B cell (primary cell): ENCODE measurements at regions of chr12 and their contacts with region 1.

Region 1: DNA sequence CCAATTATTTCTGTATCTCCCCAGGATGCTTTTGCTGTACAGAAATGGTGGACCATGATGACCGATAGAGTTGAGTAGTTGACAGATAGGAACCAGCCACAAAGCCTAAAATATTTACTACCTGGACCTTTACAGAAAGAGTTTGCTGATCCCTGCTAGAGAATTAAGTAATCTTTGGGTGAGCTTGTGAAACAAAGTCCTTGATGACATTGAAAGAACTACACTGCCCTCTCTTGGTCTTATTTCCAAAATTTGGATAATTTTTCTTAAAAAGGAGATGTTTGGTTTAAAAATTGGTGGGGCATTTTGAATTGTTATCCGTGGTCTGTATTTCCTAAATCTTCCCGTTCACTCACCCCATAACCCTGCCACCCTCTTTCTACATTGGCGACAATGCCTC is 13.7 kb upstream of the TCTN1 start:
- DNase-seq: peak; percentile 76
- ATAC-seq: peak; percentile 35
- H3K4me3 ChIP-seq: no peak overlapping the region
- H3K4me3 Mint-ChIP-seq: peak overlapping the region; percentile 7
- H3K27ac ChIP-seq: peak overlapping the region in 1 of 2 donors; percentile 43
- H3K27ac Mint-ChIP-seq: peak overlapping the region; percentile 75
- H3K4me1 ChIP-seq: peaks cover 45 to 53% of the 10 kb centered on the region in 2 donors
- H3K4me1 Mint-ChIP-seq: peaks cover 37% of the 10 kb centered on the region
- H3K27me3 ChIP-seq: no peaks in the 10 kb centered on the region
- H3K27me3 Mint-ChIP-seq: no peaks in the 10 kb centered on the region
- CTCF ChIP-seq: peak; percentile 63

Region 2: GRCh38 chr12:110449799-110450497 is 150.3 kb before region 1 on chr12 and contains the start of gene ARPC3:
- CTCF ChIA-PET with region 1: interaction called, 329 read pairs
- POLR2A ChIA-PET with region 1: interaction called, 15 read pairs
- intact Hi-C with region 1: loop called (anchors 1 kb)
- DNase-seq: peak; percentile 97
- ATAC-seq: peak; percentile 89
- H3K4me3 ChIP-seq: peak within 1 kb of the TSS; percentile 78 to 96 (median 96)
- H3K4me3 Mint-ChIP-seq: peak within 1 kb of the TSS; percentile 98
- H3K27ac ChIP-seq: peak within 1 kb of the TSS; percentile 96 to 98
- H3K27ac Mint-ChIP-seq: peak within 1 kb of the TSS; percentile 100
- H3K4me1 ChIP-seq: peaks cover 36 to 50% of the 10 kb centered on the region in 2 donors
- H3K4me1 Mint-ChIP-seq: peaks cover 42% of the 10 kb centered on the region
- H3K27me3 ChIP-seq: no peaks in the 10 kb centered on the region
- H3K27me3 Mint-ChIP-seq: no peaks in the 10 kb centered on the region
- CTCF ChIP-seq: peak; percentile 84
- total RNA-seq, gene ARPC3: 360 and 374 TPM in 2 replicates

Region 3: DNA sequence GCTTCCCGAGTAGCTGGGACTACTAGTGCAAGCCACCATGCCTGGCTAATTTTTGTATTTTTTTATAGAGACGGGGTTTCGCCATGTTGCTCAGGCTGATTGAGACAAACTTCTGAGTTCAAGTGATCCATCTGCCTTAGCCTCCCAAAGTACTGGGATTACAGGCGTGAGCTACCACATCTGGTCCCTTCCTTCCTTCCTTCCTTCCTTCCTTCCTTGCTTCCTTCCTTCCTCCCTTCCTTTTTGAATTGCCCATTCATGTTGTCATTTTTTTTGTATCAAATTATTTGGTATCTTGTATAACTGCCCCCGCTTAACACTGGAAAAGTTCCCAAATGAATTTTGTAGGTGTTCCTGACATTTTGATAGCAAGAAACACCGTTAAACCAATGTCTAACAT is 86.4 kb before region 1 on chr12:
- CTCF ChIA-PET with region 1: interaction called, 138 read pairs
- POLR2A ChIA-PET with region 1: no interaction called
- intact Hi-C with region 1: loop called (anchors 1 kb)
- DNase-seq: no peak
- ATAC-seq: no peak
- H3K4me3 ChIP-seq: no peak overlapping the region
- H3K4me3 Mint-ChIP-seq: no peak overlapping the region
- H3K27ac ChIP-seq: no peak overlapping the region
- H3K27ac Mint-ChIP-seq: no peak overlapping the region
- H3K4me1 ChIP-seq: no peaks in the 10 kb centered on the region
- H3K4me1 Mint-ChIP-seq: no peaks in the 10 kb centered on the region
- H3K27me3 ChIP-seq: no peaks in the 10 kb centered on the region
- H3K27me3 Mint-ChIP-seq: no peaks in the 10 kb centered on the region
- CTCF ChIP-seq: no peak

Region 4: DNA sequence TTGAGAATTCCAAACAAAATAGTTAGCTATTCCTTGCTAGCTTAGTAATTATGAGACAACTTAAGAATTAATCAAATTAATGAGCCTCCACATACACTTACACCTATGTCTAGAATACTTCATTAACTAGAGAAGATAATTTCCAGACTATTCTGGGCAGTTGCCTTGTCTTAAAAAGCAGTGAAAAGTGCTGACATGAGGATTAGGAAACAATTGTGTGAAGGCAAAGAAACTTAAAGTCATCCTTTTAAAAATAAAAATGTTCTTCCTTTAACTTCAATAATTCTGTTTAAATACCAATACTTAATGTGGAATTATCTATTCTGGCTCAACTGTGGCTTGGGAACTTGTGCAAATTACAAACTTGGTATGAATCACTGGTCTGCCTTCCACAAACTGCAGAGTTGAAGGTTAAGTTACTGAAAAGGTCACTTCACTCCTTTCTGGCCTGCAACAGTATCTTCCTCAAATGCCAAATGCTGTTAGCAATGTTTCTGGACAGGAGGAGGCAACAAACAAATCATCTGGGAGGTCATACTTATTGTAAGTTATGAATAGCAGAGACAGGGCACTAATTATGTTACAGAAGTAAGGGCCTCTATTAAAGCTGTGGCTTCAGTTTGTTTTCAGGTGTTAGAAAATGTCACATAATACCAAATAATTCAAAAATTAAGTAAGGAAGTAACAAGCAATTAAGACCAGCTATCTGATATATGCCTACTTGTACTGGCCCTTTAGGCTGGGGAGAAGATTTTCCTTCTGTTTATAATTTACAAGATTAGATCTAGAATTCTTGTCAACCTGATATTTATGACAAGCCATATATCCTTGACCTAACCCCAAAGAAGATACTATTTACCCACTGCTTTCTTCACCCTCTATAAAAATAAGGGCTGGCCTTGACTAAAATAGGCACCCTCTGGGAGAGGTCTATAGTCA is 36.3 kb before region 1 on chr12:
- CTCF ChIA-PET with region 1: interaction called, 51 read pairs
- POLR2A ChIA-PET with region 1: interaction called, 5 read pairs
- intact Hi-C with region 1: loop called (anchors 2 kb)
- DNase-seq: no peak
- ATAC-seq: no peak
- H3K4me3 ChIP-seq: no peak overlapping the region
- H3K4me3 Mint-ChIP-seq: peak overlapping the region; percentile 68
- H3K27ac ChIP-seq: peak overlapping the region; percentile 75 to 82
- H3K27ac Mint-ChIP-seq: peak overlapping the region; percentile 81
- H3K4me1 ChIP-seq: peaks cover 73 to 81% of the 10 kb centered on the region in 2 donors
- H3K4me1 Mint-ChIP-seq: peaks cover 73% of the 10 kb centered on the region
- H3K27me3 ChIP-seq: no peaks in the 10 kb centered on the region
- H3K27me3 Mint-ChIP-seq: no peaks in the 10 kb centered on the region
- CTCF ChIP-seq: no peak

Region 5: GRCh38 chr12:110619534-110619953 is 19.3 kb after region 1 on chr12:
- CTCF ChIA-PET with region 1: interaction called, 91 read pairs
- POLR2A ChIA-PET with region 1: interaction called, 10 read pairs
- intact Hi-C with region 1: loop called (anchors 2 kb)
- DNase-seq: peak; percentile 76
- ATAC-seq: peak; percentile 75
- H3K4me3 ChIP-seq: peak overlapping the region in 4 of 5 experiments; percentile 30 to 55 (median 44)
- H3K4me3 Mint-ChIP-seq: peak overlapping the region; percentile 89
- H3K27ac ChIP-seq: peak overlapping the region; percentile 63 to 76
- H3K27ac Mint-ChIP-seq: peak overlapping the region; percentile 96
- H3K4me1 ChIP-seq: peaks cover 60 to 81% of the 10 kb centered on the region in 2 donors
- H3K4me1 Mint-ChIP-seq: peaks cover 65% of the 10 kb centered on the region
- H3K27me3 ChIP-seq: no peaks in the 10 kb centered on the region
- H3K27me3 Mint-ChIP-seq: no peaks in the 10 kb centered on the region
- CTCF ChIP-seq: peak; percentile 62

Region 6: GRCh38 chr12:110698171-110698902 is 98.1 kb after region 1 on chr12:
- CTCF ChIA-PET with region 1: interaction called, 52 read pairs
- POLR2A ChIA-PET with region 1: no interaction called
- intact Hi-C with region 1: loop called (anchors 1 kb)
- DNase-seq: peak; percentile 90
- ATAC-seq: peak; percentile 100
- H3K4me3 ChIP-seq: peak overlapping the region in 2 of 5 experiments; percentile 21 to 29
- H3K4me3 Mint-ChIP-seq: peak overlapping the region; percentile 64
- H3K27ac ChIP-seq: peak overlapping the region in 1 of 2 donors; percentile 58
- H3K27ac Mint-ChIP-seq: peak overlapping the region; percentile 94
- H3K4me1 ChIP-seq: peaks cover 36 to 37% of the 10 kb centered on the region in 2 donors
- H3K4me1 Mint-ChIP-seq: peaks cover 47% of the 10 kb centered on the region
- H3K27me3 ChIP-seq: no peaks in the 10 kb centered on the region
- H3K27me3 Mint-ChIP-seq: no peaks in the 10 kb centered on the region
- CTCF ChIP-seq: peak; percentile 82

Region 7: DNA sequence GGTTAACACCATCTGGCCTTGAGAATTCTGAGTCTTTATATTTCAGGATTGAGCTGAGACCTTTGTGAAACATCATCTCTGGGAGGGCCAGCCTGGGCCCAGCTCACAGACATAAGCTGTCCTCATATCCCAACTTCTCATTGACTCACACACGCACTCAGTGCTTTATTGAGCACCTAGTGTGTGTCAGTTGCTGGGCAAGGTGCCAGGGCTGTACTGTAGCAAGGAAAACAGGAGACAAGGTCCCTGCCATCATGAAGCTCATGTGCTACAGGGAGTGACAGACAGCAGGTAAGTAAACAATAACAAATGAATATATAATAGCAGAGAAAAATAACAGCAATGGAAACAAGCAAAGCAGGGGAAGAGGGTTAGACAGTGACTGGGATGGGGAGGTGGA is 216.0 kb after region 1 on chr12:
- CTCF ChIA-PET with region 1: no interaction called
- POLR2A ChIA-PET with region 1: no interaction called
- intact Hi-C with region 1: no loop called
- DNase-seq: no peak
- ATAC-seq: no peak
- H3K4me3 ChIP-seq: no peak overlapping the region
- H3K4me3 Mint-ChIP-seq: no peak overlapping the region
- H3K27ac ChIP-seq: no peak overlapping the region
- H3K27ac Mint-ChIP-seq: no peak overlapping the region
- H3K4me1 ChIP-seq: no peaks in the 10 kb centered on the region
- H3K4me1 Mint-ChIP-seq: peaks cover 3% of the 10 kb centered on the region
- H3K27me3 ChIP-seq: peaks cover 0 to 6% (median 1%) of the 10 kb centered on the region in 4 experiments
- H3K27me3 Mint-ChIP-seq: peaks cover 15% of the 10 kb centered on the region
- CTCF ChIP-seq: no peak